ENCODE measurements at regions of chr11 and their contacts with region 1.

Region 1: DNA sequence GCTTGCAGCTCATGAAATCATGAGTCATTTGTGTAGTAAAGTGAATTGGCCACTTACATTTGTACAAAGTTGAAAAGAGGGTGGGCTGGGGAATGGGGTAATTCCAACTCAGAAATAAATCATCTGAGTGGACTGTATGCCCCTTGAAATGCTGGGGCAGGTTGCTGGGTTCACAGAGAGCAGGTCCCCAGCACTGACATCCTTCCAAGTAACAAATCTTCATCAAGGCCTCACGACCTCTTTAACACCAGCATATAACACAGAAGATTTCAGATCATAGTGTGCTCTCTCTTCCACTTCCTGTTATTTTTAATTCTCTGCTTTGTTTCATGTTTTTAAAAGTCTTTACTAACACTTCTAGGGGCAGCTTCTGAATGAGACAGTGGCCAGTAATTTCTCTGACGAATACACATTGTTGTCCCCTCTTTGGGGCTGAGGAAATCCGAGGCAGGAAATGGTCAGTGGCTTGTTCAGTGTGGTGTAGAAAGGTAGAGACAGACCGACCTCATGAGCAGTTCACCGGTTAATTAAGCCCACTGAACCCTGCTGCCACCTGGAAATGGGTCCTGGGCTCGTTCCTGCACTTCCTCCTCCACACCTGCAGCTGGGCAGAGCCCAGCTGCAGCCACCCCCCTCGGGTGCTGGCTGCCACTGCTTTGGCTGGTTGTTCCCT is 127.7 kb downstream of the MAML2 start:
- DNase-seq: peak; percentile 81
- H3K4me3 ChIP-seq: peak overlapping the region in 1 of 3 experiments; percentile 4
- H3K27ac ChIP-seq: peak overlapping the region; percentile 92
- H3K4me1 ChIP-seq: peaks cover 66% of the 10 kb centered on the region
- H3K27me3 ChIP-seq: no peaks in the 10 kb centered on the region
- CTCF ChIP-seq: no peak
- POLR2A ChIP-seq: peak; percentile 38

Region 2: GRCh38 chr11:96102664-96103078 is 112.6 kb before region 1 on chr11:
- CTCF ChIA-PET with region 1: no interaction called
- POLR2A ChIA-PET with region 1: no interaction called
- dilution Hi-C with region 1: no loop called
- intact Hi-C with region 1: loop called (anchors 2 kb)
- DNase-seq: peak; percentile 55
- H3K4me3 ChIP-seq: no peak overlapping the region
- H3K27ac ChIP-seq: peak overlapping the region; percentile 74
- H3K4me1 ChIP-seq: peaks cover 30% of the 10 kb centered on the region
- H3K27me3 ChIP-seq: no peaks in the 10 kb centered on the region
- CTCF ChIP-seq: no peak
- POLR2A ChIP-seq: no peak

Region 3: GRCh38 chr11:96134602-96135001 is 80.6 kb before region 1 on chr11:
- CTCF ChIA-PET with region 1: no interaction called
- POLR2A ChIA-PET with region 1: no interaction called
- dilution Hi-C with region 1: no loop called
- intact Hi-C with region 1: no loop called
- DNase-seq: peak; percentile 64
- H3K4me3 ChIP-seq: no peak overlapping the region
- H3K27ac ChIP-seq: no peak overlapping the region
- H3K4me1 ChIP-seq: peaks cover 13% of the 10 kb centered on the region
- H3K27me3 ChIP-seq: no peaks in the 10 kb centered on the region
- CTCF ChIP-seq: no peak
- POLR2A ChIP-seq: no peak

Region 4: DNA sequence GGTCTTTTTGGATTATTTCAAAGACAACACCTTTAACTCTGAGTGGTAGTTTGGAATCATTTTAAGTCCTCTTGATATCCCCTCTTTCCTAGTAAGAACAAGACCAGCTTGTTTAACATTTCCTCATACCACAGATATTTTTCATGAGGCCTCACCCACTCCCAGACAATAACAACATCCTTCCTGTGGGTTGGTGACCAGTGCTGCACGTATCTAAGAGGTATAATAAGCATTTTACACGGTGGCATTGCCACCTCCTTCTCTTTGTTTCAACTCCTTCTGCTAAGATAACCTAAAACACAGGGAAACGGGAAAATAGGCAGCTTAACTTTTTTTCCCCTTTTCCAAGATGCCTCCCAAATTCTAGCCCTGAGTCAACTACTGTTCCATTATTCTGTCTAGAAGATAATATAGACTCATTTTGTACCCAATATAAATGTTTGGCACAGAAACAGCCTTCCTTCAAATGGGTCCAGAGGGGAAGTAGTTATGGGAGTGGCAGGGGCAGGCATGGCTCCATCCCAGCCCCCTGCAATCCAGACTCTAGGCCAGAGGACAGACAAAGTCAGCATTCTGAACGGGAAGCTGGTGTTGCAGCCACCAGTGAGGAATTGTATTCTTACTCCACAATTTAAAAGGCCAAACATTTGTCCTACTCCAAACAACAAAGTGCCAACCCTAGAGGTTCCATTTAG is 99.2 kb after region 1 on chr11:
- CTCF ChIA-PET with region 1: no interaction called
- POLR2A ChIA-PET with region 1: no interaction called
- dilution Hi-C with region 1: no loop called
- intact Hi-C with region 1: no loop called
- DNase-seq: peak; percentile 65
- H3K4me3 ChIP-seq: peak overlapping the region in 1 of 3 experiments; percentile 9
- H3K27ac ChIP-seq: peak overlapping the region; percentile 95
- H3K4me1 ChIP-seq: peaks cover 72% of the 10 kb centered on the region
- H3K27me3 ChIP-seq: no peaks in the 10 kb centered on the region
- CTCF ChIP-seq: no peak
- POLR2A ChIP-seq: peak; percentile 55

Measured in endothelial cell of umbilical vein (primary cell).